ENCODE measurements at regions of chr12 and their contacts with region 1.

Region 1: DNA sequence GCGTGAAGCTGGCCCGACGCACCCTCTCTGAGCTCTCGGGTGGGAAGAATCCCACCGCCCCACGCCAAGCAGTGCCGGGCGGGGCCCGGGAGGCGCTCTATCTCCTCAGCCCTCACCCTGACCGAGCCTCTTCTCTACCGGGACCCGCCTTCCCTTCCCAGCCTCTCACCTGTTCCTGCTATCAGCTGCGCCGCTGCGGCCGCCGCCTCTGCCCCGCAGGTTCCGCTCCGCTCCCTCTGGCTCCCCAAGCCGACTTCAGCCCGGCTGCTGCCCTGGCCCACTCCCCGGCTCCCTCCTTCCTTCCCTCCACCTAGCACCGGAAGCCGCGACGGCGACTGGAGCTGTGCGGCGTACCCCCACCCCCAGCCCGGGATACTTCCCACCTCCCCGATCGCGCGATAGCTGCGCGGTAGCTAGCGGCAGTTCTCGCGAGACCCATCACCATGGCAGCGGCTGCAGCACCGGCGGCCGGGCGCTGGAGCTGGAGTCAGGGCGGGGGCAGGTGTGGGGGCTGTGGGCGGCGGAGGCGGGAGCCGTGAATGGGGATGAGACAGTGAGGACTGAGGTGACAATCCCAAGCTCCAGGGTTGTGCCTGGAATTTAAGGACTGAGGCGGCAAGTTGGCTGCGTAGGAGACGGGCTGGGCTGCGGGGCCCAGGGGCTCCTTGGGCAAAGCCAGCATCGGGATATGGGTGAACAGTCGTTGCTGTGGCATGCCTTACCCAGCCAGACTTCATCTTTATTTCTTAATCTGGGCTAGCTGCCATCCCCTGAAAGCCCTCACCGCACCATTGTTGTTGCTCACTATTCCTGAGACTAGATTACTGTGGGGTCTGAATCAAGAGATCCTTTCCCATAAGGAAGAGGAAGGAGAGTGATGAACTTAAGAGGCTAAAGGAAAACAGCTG is at the start of gene ARF3:
- DNase-seq: peak; percentile 88
- ATAC-seq: peak; percentile 95
- H3K4me3 Mint-ChIP-seq: peak within 1 kb of the TSS; percentile 99
- H3K27ac Mint-ChIP-seq: peak within 1 kb of the TSS; percentile 91
- H3K4me1 Mint-ChIP-seq: peaks cover 41% of the 10 kb centered on the region
- H3K27me3 Mint-ChIP-seq: peaks cover 8% of the 10 kb centered on the region
- CTCF ChIP-seq: no peak
- total RNA-seq, gene ARF3: 113 and 119 TPM in 2 replicates

Region 2: GRCh38 chr12:48865434-48866290 is 91.7 kb before region 1 on chr12 and contains the start of gene RND1:
- CTCF ChIA-PET with region 1: no interaction called
- POLR2A ChIA-PET with region 1: no interaction called
- intact Hi-C with region 1: loop called (anchors 1 kb)
- DNase-seq: peak; percentile 64
- ATAC-seq: peak; percentile 90
- H3K4me3 Mint-ChIP-seq: peak within 1 kb of the TSS; percentile 95
- H3K27ac Mint-ChIP-seq: peak within 1 kb of the TSS; percentile 78
- H3K4me1 Mint-ChIP-seq: peaks cover 27% of the 10 kb centered on the region
- H3K27me3 Mint-ChIP-seq: no peaks in the 10 kb centered on the region
- CTCF ChIP-seq: no peak
- total RNA-seq, gene RND1: 4.9 and 5.9 TPM in 2 replicates

Region 3: GRCh38 chr12:48969833-48970701 is 12.7 kb after region 1 on chr12:
- CTCF ChIA-PET with region 1: interaction called, 11 read pairs
- POLR2A ChIA-PET with region 1: interaction called, 31 read pairs
- intact Hi-C with region 1: loop called (anchors 1 kb)
- DNase-seq: no peak
- ATAC-seq: peak; percentile 63
- H3K4me3 Mint-ChIP-seq: peak overlapping the region; percentile 55
- H3K27ac Mint-ChIP-seq: no peak overlapping the region
- H3K4me1 Mint-ChIP-seq: peaks cover 37% of the 10 kb centered on the region
- H3K27me3 Mint-ChIP-seq: peaks cover 33% of the 10 kb centered on the region
- CTCF ChIP-seq: no peak

Region 4: DNA sequence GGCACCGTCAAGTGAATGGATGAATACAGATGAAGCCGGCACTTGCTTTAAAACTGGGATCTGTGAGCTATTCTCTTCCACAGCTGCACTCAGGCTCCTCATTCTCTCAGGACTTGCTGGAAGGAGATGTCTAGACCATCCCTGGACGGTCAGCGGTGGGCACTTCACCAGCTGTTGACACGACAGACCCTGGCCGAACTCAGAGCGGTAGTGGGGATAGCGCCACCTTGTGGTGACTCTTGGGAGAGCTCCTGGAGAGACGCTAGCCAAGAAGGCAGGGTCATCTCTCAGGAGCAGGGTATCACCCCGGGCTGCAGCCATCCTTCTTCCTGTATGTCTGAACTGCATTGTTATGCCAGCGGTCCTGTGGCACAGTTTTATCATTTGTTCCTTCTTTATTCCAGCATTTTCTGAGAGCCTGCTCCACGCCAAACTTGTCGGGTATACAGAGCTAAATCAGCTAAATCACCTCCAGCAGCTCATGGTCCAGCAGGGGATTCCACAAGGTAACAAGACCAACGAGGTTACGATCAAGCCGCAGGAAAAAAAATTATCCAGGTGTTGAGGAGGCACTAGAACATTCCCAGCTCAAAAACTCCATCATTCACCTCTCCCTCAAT is 30.7 kb after region 1 on chr12:
- CTCF ChIA-PET with region 1: interaction called, 10 read pairs
- POLR2A ChIA-PET with region 1: interaction called, 4 read pairs
- intact Hi-C with region 1: no loop called
- DNase-seq: peak; percentile 58
- ATAC-seq: peak; percentile 90
- H3K4me3 Mint-ChIP-seq: no peak overlapping the region
- H3K27ac Mint-ChIP-seq: no peak overlapping the region
- H3K4me1 Mint-ChIP-seq: no peaks in the 10 kb centered on the region
- H3K27me3 Mint-ChIP-seq: peaks cover 34% of the 10 kb centered on the region
- CTCF ChIP-seq: peak; percentile 31

Region 5: DNA sequence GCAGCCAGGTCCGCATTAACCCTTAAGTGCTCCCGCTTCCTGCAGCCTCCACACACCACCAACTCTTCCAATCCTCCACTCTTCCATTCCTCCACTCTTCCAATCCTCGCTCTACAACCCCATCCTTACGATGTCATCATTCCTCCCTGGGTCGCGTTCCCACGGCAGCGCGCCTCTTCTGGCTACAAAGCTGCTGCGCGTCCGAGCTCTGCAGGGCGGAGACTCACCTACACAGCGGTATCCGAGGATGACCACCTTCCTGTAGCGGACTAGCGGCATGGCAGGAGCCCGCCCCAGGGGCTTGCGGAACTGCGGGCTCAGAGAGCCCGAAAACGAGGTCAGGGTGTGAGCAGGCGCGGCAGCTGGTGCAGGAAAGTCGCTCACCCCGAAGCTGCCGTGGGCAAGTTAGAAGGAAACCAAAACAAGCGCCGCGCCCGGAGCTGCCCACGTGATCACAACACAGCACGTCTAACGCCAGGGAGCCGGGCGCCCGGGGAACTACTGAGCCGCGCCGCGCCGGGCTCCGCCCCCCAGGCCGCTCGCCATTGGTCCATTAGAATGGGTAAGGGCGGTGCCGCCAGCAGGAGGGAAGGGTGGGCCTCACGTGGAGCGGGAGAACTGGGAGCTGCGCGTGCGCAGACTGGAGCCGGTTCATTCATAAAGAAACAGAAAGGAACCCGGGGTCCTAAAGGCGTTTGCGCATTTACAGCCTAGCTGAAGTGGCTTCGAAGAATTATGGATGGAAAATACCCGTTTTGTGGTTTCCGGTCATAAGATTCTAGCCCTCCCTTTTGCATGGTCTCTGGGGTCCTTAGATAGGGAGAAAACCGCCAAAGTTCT is 112.3 kb after region 1 on chr12 and contains the start of gene RHEBL1:
- CTCF ChIA-PET with region 1: no interaction called
- POLR2A ChIA-PET with region 1: no interaction called
- intact Hi-C with region 1: no loop called
- DNase-seq: peak; percentile 98
- ATAC-seq: peak; percentile 100
- H3K4me3 Mint-ChIP-seq: peak within 1 kb of the TSS; percentile 99
- H3K27ac Mint-ChIP-seq: peak within 1 kb of the TSS; percentile 93
- H3K4me1 Mint-ChIP-seq: peaks cover 15% of the 10 kb centered on the region
- H3K27me3 Mint-ChIP-seq: no peaks in the 10 kb centered on the region
- CTCF ChIP-seq: no peak
- total RNA-seq, gene RHEBL1: 3.2 and 3.3 TPM in 2 replicates